ENCODE measurements at regions of chr7 and their contacts with region 1.

Region 1: GRCh38 chr7:66557608-66558143 is 71.0 kb upstream of the KCTD7 start:
- DNase-seq: no peak
- H3K4me3 ChIP-seq: no peak overlapping the region
- CTCF ChIP-seq: peak; percentile 99

Region 2: GRCh38 chr7:66429498-66430163 is 128.0 kb before region 1 on chr7:
- CTCF ChIA-PET with region 1: no interaction called
- POLR2A ChIA-PET with region 1: no interaction called
- DNase-seq: no peak
- H3K4me3 ChIP-seq: no peak overlapping the region
- CTCF ChIP-seq: no peak

Region 3: DNA sequence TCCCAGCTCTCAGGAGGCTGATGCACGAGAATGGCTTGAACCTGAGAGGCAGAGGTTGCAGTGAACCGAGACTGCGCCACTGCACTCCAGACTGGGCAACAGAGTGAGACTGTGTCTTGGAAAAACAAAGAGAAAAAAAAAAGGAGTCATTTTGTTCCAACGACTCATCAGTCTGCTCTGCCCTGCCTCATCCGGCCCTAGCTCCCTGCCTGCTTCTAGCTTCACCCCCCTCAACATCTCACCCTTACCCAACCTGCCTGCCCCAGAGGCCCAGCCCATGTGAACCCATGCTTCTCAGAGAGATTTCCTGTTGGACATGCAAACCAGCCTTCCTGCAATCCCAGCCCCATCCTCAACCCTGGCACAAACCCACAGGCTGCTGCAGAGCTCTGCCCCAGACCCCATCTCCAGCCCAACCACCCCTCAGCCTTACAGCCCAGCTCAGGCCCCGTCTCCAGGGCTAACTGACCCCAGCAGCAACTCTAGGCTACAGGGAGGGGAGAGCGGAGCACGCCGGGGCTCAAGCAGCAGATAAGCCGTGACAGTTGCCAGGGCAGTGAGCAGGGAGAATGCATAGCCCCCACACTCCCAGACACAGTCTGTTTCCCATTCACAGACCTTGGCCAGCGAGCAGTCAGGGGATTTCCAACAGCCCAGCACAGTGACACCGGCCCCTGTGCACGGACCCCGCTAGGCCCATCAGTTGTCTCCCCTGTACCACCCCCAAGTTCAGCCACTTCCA is 15.0 kb before region 1 on chr7:
- CTCF ChIA-PET with region 1: interaction called, 12 read pairs
- POLR2A ChIA-PET with region 1: no interaction called
- DNase-seq: no peak
- H3K4me3 ChIP-seq: no peak overlapping the region
- CTCF ChIP-seq: no peak

Region 4: GRCh38 chr7:66575398-66575797 is 17.7 kb after region 1 on chr7:
- CTCF ChIA-PET with region 1: interaction called, 17 read pairs
- POLR2A ChIA-PET with region 1: no interaction called
- DNase-seq: no peak
- H3K4me3 ChIP-seq: no peak overlapping the region
- CTCF ChIP-seq: no peak

Region 5: DNA sequence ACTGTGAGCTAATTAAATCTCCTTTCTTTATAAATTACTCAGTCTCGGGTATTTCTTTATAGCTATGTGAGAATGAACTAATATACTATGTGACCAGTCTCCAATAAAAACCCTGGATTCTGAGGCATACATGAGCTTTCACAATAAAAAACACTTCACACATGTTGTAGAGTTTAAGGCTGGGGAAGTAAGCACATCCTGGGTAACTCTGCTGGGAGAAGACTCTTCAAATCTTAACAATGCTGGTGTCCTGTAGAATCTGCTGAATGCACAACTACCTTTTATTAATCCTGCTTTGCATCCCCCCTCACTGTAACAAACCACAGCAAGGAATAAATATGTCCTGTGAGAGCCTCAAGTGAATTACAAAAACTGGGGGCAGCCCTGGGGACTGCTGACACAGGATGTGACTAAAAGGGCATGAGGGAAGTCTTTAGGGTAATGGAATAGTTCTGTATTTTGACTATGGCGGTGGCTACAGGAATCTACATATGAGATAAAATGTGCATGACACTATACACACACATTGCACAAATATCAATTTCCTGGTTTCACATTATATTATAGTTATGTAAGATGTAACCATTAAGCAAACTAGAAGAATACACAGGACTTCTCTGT is 25.9 kb after region 1 on chr7:
- CTCF ChIA-PET with region 1: interaction called, 12 read pairs
- POLR2A ChIA-PET with region 1: no interaction called
- DNase-seq: no peak
- H3K4me3 ChIP-seq: no peak overlapping the region
- CTCF ChIP-seq: no peak

Measured in AG04449 (cell line).